Ovary (tissue), 10 donors: ENCODE measurements at regions of chr14 and their contacts with region 1.

Region 1: DNA sequence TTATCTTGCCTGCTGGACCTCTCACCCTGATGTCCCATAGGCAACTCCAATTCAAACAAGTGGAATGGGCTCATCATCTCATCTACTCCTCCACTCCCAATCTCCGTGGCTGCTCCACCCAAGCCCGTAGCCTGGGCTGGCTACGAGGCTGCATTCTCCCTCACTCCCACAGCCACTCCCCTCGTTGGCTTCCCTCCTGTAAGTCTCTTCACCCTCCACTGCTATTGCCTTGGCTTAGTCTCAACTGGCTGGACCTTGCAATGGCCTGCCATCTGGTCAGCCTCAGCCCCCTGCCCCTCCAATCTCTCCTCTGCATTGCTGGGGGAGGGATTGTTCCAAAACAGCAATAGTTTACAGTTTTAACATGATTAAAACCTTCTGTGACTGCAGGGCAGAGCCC is 44.4 kb upstream of the PELI2 start:
- DNase-seq: peak in 4 of 5 donors; percentile 36 to 50 (median 44)
- H3K4me3 ChIP-seq: no peak overlapping the region
- H3K27ac ChIP-seq: no peak overlapping the region
- H3K4me1 ChIP-seq: peaks cover 5% of the 10 kb centered on the region
- H3K27me3 ChIP-seq: no peaks in the 10 kb centered on the region
- CTCF ChIP-seq: no peak
- EP300 ChIP-seq: no peak
- POLR2A ChIP-seq: no peak

Region 2: GRCh38 chr14:55913324-55914025 is 160.3 kb before region 1 on chr14:
- intact Hi-C with region 1: loop called in 1 of 4 experiments (anchors 10 kb)
- DNase-seq: peak in 3 of 5 donors; percentile 15 to 20 (median 19)
- H3K4me3 ChIP-seq: no peak overlapping the region
- H3K27ac ChIP-seq: no peak overlapping the region
- H3K4me1 ChIP-seq: no peaks in the 10 kb centered on the region
- H3K27me3 ChIP-seq: no peaks in the 10 kb centered on the region
- CTCF ChIP-seq: no peak
- EP300 ChIP-seq: no peak
- POLR2A ChIP-seq: no peak